ENCODE measurements at regions of chr10 and their contacts with region 1.

Region 1: DNA sequence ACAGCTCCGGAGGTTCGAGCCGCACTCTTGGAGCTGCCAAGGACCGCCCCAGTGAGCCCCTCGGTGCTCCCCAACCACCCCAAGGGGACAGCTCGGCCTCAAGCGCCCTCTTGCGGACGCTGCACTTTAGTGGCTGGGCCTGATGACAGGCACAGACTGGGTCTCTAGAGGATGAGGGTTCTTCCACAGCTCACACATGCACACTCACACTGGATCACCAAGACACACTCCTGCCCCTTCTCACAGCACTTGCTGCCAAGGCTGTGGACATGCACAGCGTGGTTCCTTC is 2.1 kb downstream of the RET start:
- DNase-seq: peak; percentile 72
- ATAC-seq: peak; percentile 62

Region 2: DNA sequence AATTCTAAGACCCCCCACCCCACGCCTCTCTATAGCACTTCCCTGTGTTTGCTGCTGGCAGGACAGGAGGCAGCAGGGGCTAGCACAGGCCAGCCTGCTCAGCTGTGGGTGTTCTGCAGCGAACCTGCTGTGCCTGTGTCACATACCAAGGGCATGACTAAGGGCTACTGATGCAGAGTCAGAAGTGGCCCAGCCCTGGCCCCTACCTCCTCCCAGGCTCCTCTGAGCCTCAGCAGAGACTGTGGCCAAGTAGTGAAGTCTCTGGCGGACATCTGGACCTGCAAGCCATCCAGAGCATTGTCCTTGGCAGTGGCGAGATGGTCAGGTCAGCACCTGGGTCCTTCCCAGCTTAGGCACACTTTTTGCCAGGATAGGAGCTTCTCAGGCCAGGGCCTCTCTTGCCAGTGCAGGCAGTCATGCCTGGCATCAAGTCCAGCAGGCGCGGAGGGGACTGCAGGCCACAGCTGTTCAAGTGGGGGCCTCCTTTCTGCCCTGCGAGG is 118.4 kb before region 1 on chr10:
- intact Hi-C with region 1: loop called (anchors 10 kb)
- DNase-seq: peak; percentile 48
- ATAC-seq: peak; percentile 71

Region 3: GRCh38 chr10:43710772-43711471 is 632.0 kb after region 1 on chr10:
- intact Hi-C with region 1: no loop called
- DNase-seq: no peak
- ATAC-seq: no peak

Measured in Right ventricle myocardium superior (tissue), 1 donor.